Right cardiac atrium (tissue), 5 donors: ENCODE measurements at regions of chr6 and their contacts with region 1.

Region 1: GRCh38 chr6:117555882-117556498 is 46.3 kb downstream of the GOPC start:
- DNase-seq: peak in 2 of 3 donors; percentile 16 to 43
- ATAC-seq: peak in 1 of 2 donors; percentile 18
- H3K4me3 ChIP-seq: no peak overlapping the region
- H3K27ac ChIP-seq: no peak overlapping the region
- H3K4me1 ChIP-seq: no peaks in the 10 kb centered on the region
- H3K27me3 ChIP-seq: no peaks in the 10 kb centered on the region

Region 2: DNA sequence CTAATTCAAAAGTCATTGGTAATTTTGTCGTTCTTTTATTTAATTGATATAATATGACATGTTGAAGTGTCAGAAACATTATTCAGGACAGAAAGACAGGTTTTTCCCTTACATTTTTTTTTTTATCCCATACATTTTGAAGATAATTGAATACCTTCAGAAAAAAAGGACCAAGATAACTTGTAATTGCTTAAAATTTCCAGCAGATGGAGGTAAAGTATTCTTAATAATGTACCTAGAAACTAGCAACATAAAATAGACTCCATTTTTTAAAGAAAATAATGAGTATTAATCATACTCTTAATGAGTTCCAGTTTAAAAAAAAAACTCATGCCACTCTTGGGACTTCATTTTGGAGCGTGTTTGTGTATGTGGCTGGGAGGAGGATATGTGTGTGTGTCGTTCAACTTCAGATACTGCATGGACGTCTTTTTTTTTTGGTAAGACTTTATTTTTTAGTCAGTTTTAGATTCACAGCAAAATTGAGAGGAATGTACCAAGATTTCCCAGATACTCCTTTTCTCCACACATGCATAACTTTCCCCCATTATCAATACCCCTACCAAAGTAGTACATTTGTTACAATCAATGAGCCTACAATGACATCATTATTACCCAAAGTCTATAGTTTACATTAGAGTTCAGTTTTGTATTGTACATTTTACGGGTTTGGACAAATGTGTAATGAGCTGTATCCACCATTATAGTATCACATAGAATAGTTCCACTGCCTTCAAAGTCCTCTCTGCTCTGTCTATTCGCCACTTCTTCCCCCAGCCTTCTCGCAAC is 209.7 kb before region 1 on chr6:
- intact Hi-C with region 1: loop called (anchors 5 to 10 kb)
- DNase-seq: no peak
- ATAC-seq: no peak
- H3K4me3 ChIP-seq: peak overlapping the region; percentile 52
- H3K27ac ChIP-seq: no peak overlapping the region
- H3K4me1 ChIP-seq: no peaks in the 10 kb centered on the region
- H3K27me3 ChIP-seq: no peaks in the 10 kb centered on the region

Region 3: DNA sequence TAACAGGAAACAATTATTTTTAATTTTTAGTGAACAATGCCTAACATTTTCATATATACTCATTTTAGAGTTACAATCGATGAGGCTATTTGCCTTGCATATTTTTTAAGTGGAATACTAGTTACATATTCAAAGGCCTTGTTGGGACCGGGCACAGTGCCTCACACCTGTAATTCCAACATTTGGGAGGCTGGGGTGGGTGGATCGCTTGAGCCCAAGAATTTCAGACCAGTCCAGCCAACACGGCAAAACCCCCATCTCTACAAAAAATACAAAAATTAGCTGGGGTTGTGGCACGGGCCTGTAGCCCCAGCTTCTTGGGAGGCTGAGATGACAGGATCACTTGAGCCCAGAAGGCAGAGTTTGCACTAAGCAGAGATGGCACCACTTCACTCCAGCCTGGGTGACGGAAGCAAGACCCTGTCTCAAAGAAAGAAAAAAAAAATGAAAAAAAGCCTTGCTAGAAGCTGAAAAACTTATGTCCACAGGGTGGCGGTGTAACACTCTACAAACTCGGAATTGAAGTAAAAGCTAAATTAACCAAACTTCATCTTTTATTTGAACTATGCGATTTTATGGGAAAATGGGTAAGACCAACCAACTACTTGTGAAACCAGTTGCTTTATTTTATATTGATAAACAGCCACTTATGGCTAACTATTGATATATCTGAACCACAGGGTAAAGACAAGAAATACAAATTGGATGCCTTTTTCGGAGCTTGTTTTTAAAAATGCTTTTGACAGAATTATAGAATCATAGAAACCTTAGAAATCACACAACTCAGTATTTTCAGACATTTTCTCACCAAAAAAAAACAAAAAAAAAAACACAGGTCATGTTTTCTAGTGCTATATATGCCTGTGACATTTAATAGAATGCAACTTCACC is 106.2 kb before region 1 on chr6:
- intact Hi-C with region 1: loop called (anchors 2 to 5 kb)
- DNase-seq: peak; percentile 25 to 47 (median 33)
- ATAC-seq: peak in 1 of 2 donors; percentile 37
- H3K4me3 ChIP-seq: no peak overlapping the region
- H3K27ac ChIP-seq: no peak overlapping the region
- H3K4me1 ChIP-seq: no peaks in the 10 kb centered on the region
- H3K27me3 ChIP-seq: no peaks in the 10 kb centered on the region

Region 4: GRCh38 chr6:117482240-117483003 is 73.6 kb before region 1 on chr6 and contains the start of gene DCBLD1:
- intact Hi-C with region 1: loop called in 1 of 4 experiments (anchors 5 kb)
- DNase-seq: peak; percentile 84 to 93 (median 92)
- ATAC-seq: peak; percentile 95 to 96
- H3K4me3 ChIP-seq: peak within 1 kb of the TSS; percentile 71
- H3K27ac ChIP-seq: peak within 1 kb of the TSS; percentile 78
- H3K4me1 ChIP-seq: no peaks in the 10 kb centered on the region
- H3K27me3 ChIP-seq: no peaks in the 10 kb centered on the region
- total RNA-seq, gene DCBLD1: 3.2 to 5.7 (median 4.1) TPM

Region 5: DNA sequence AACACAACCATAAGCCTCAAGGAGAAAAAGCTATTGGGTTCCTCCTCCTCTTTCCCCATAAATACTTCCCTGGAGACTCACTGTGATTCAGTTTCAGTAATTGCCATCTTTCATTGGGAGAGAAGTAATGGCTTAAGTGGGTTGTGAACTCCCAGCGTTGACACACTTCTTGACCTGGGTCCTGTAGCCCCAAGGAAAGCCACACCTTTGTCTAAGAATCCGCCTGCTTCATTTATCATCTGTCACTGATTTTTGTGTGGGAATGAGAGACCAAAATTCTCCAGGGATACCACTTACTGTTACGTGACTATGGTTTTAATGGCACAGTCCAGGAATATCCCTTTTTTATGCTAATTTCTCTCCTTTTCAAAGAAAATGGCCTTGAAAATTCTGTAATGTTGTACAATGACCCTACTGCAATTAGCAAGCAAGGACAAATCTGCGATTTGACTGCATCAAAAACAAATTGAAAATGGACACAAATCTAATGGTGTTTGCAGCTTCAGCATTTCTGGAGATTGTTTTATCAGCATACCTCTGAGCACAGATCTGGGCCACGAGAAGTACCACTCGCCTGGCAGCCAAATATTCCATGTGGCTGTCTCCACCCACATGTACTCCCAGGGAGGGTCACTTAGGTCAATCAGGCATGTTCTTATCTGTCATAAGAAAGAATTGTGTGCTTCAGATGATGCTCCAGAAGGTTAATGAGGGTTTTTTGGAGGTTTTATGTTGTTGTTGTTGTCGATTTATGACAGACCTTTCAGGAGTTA is 43.7 kb before region 1 on chr6:
- intact Hi-C with region 1: no loop called
- DNase-seq: no peak
- ATAC-seq: no peak
- H3K4me3 ChIP-seq: no peak overlapping the region
- H3K27ac ChIP-seq: no peak overlapping the region
- H3K4me1 ChIP-seq: no peaks in the 10 kb centered on the region
- H3K27me3 ChIP-seq: no peaks in the 10 kb centered on the region